MCF 10A (cell line): ENCODE measurements at regions of chr10 and their contacts with region 1.

Region 1: DNA sequence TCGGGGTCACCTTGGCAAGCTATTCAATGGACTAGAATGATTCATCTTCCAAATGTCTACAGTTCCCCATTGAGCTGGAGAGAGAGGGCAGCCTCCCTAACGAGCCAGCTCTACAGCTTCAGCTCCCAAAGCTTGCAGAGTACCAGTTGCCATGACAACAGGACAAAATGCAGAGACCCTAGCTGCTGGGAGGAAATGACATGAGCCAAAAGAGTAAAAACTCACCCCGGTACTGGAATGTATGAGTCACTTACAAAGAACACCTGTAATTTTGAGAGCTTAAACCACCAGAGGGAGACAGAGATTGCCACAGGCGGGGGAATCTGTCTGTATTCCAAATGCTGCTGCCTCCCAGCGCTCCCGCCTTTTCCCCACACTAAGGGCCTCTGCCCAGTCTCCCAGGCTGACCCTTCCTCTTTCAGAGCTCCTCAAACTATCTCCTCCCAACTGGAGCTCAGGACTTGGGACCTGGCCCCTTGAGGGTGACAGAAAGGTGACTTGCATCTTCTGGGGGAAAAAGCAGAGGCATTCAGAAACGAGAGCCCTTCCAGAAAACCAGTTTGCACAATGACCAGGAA is 95.5 kb downstream of the CUL2 start:
- DNase-seq: peak; percentile 86
- H3K4me3 Mint-ChIP-seq: no peak overlapping the region
- H3K27ac Mint-ChIP-seq: no peak overlapping the region
- H3K4me1 Mint-ChIP-seq: peaks cover 30% of the 10 kb centered on the region
- H3K27me3 Mint-ChIP-seq: no peaks in the 10 kb centered on the region
- CTCF ChIP-seq: peak; percentile 76

Region 2: GRCh38 chr10:34723750-34724149 is 270.9 kb before region 1 on chr10:
- CTCF ChIA-PET with region 1: interaction called, 29 read pairs
- POLR2A ChIA-PET with region 1: interaction called, 3 read pairs
- intact Hi-C with region 1: loop called (anchors 5 kb)
- DNase-seq: peak; percentile 69
- H3K4me3 Mint-ChIP-seq: peak overlapping the region; percentile 51
- H3K27ac Mint-ChIP-seq: peak overlapping the region; percentile 10
- H3K4me1 Mint-ChIP-seq: peaks cover 41% of the 10 kb centered on the region
- H3K27me3 Mint-ChIP-seq: no peaks in the 10 kb centered on the region
- CTCF ChIP-seq: peak; percentile 53

Region 3: GRCh38 chr10:35015843-35016408 is 21.3 kb after region 1 on chr10:
- CTCF ChIA-PET with region 1: interaction called, 11 read pairs
- POLR2A ChIA-PET with region 1: no interaction called
- intact Hi-C with region 1: no loop called
- DNase-seq: no peak
- H3K4me3 Mint-ChIP-seq: no peak overlapping the region
- H3K27ac Mint-ChIP-seq: peak overlapping the region; percentile 46
- H3K4me1 Mint-ChIP-seq: no peaks in the 10 kb centered on the region
- H3K27me3 Mint-ChIP-seq: no peaks in the 10 kb centered on the region
- CTCF ChIP-seq: no peak

Region 4: GRCh38 chr10:35126530-35127296 is 132.1 kb after region 1 on chr10 and contains the start of gene CREM:
- CTCF ChIA-PET with region 1: interaction called, 3 read pairs
- POLR2A ChIA-PET with region 1: no interaction called
- intact Hi-C with region 1: loop called (anchors 10 kb)
- DNase-seq: peak; percentile 98
- H3K4me3 Mint-ChIP-seq: peak within 1 kb of the TSS; percentile 82
- H3K27ac Mint-ChIP-seq: peak within 1 kb of the TSS; percentile 97
- H3K4me1 Mint-ChIP-seq: peaks cover 6% of the 10 kb centered on the region
- H3K27me3 Mint-ChIP-seq: no peaks in the 10 kb centered on the region
- CTCF ChIP-seq: peak; percentile 86
- total RNA-seq, gene CREM: 30.2 and 31.3 TPM in 2 replicates

Region 5: GRCh38 chr10:35218339-35218955 is 223.8 kb after region 1 on chr10:
- CTCF ChIA-PET with region 1: interaction called, 4 read pairs
- POLR2A ChIA-PET with region 1: no interaction called
- intact Hi-C with region 1: loop called (anchors 1 kb)
- DNase-seq: peak; percentile 91
- H3K4me3 Mint-ChIP-seq: no peak overlapping the region
- H3K27ac Mint-ChIP-seq: no peak overlapping the region
- H3K4me1 Mint-ChIP-seq: no peaks in the 10 kb centered on the region
- H3K27me3 Mint-ChIP-seq: no peaks in the 10 kb centered on the region
- CTCF ChIP-seq: peak; percentile 63